Endothelial cell of umbilical vein (primary cell): ENCODE measurements at regions of chr12 and their contacts with region 1.

Region 1: GRCh38 chr12:49515266-49515665 is 23.6 kb upstream of the KCNH3 start:
- DNase-seq: peak; percentile 83
- H3K4me3 ChIP-seq: no peak overlapping the region
- H3K27ac ChIP-seq: peak overlapping the region; percentile 62
- H3K4me1 ChIP-seq: peaks cover 38% of the 10 kb centered on the region
- H3K27me3 ChIP-seq: no peaks in the 10 kb centered on the region
- CTCF ChIP-seq: no peak
- POLR2A ChIP-seq: no peak

Region 2: GRCh38 chr12:48454667-48455066 is 1060.6 kb before region 1 on chr12:
- CTCF ChIA-PET with region 1: no interaction called
- POLR2A ChIA-PET with region 1: no interaction called
- dilution Hi-C with region 1: no loop called
- intact Hi-C with region 1: no loop called
- DNase-seq: peak; percentile 59
- H3K4me3 ChIP-seq: no peak overlapping the region
- H3K27ac ChIP-seq: no peak overlapping the region
- H3K4me1 ChIP-seq: no peaks in the 10 kb centered on the region
- H3K27me3 ChIP-seq: peaks cover 0 to 5% of the 10 kb centered on the region in 2 experiments
- CTCF ChIP-seq: peak; percentile 30 to 57
- POLR2A ChIP-seq: no peak

Region 3: GRCh38 chr12:49060237-49061156 is 454.8 kb before region 1 on chr12 and contains the start of gene KMT2D:
- CTCF ChIA-PET with region 1: no interaction called
- POLR2A ChIA-PET with region 1: no interaction called
- dilution Hi-C with region 1: no loop called
- intact Hi-C with region 1: no loop called
- DNase-seq: peak; percentile 92
- H3K4me3 ChIP-seq: peak within 1 kb of the TSS; percentile 73 to 97 (median 77)
- H3K27ac ChIP-seq: peak within 1 kb of the TSS; percentile 93
- H3K4me1 ChIP-seq: peaks cover 39% of the 10 kb centered on the region
- H3K27me3 ChIP-seq: no peaks in the 10 kb centered on the region
- CTCF ChIP-seq: peak; percentile 6 to 13
- POLR2A ChIP-seq: peak; percentile 85
- total RNA-seq, gene KMT2D: 106 and 120 TPM in 2 replicates

Region 4: DNA sequence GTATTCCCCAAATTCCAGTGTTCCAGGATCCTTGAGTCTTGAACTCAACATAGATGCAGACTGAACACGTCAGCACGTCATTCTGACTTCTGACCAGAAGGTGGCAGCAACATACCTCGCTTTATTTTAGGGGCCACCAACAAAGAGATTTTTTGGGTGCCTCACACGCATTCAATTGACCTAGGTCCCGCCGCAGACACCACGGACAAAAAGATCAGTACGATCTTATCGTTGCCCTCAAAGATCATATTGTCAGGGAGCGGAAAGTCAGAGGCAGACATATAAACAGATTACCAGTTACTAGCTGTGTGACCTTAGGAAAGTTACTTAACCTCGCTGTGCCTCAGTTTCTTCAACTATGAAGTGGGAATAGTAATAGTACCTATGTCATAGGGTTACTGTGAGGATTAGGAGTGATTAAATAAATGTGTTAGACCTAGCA is 226.8 kb before region 1 on chr12:
- CTCF ChIA-PET with region 1: interaction called, 6 read pairs
- POLR2A ChIA-PET with region 1: no interaction called
- dilution Hi-C with region 1: no loop called
- intact Hi-C with region 1: loop called (anchors 10 kb)
- DNase-seq: peak; percentile 57
- H3K4me3 ChIP-seq: no peak overlapping the region
- H3K27ac ChIP-seq: no peak overlapping the region
- H3K4me1 ChIP-seq: peaks cover 2% of the 10 kb centered on the region
- H3K27me3 ChIP-seq: peaks cover 4 to 9% of the 10 kb centered on the region in 2 experiments
- CTCF ChIP-seq: peak; percentile 75 to 80
- POLR2A ChIP-seq: no peak

Region 5: DNA sequence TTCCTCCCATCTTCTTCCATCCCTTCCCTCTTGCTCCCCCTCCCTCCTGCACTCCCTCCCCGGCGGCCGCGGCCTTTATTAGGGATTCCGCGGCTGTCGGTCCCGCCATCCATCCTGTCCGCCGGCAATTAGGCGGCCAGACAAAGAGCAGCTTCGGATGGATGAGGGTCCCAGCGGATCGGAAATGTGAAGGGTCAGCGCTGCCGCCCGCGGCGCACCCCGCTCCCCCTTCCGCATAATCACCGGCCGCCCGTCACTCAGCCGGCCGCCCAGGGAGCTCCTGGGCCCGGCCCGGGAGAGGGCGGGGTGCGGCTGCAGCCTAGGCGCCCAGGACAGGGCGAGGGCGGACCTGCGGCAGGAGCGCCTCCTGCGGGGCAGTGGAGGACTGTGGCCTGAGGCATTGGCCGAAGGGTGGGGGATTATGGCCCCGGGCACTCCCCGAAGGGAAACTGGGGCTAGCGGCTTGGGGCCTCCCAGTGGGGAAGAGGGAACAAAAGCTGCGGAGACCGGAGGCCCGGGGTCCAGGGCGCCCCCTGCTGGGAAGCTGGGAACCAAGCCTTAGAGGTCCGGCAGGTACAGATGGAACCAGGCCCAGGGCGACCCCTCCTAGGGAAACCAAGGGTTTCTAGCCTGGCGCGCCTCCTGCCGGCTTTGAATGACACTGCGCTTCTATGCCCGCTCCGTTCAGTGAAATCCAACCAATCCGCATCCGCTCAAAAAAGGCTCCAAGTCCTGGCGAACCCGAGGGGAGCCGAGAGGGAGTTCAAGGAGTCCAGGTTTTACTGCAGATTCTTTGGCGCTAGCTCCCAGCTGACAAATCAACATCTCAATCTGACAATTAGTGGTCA is 173.0 kb before region 1 on chr12:
- CTCF ChIA-PET with region 1: interaction called, 59 read pairs
- POLR2A ChIA-PET with region 1: no interaction called
- dilution Hi-C with region 1: no loop called
- intact Hi-C with region 1: no loop called
- DNase-seq: peak; percentile 76
- H3K4me3 ChIP-seq: peak overlapping the region in 2 of 3 experiments; percentile 24 to 25
- H3K27ac ChIP-seq: no peak overlapping the region
- H3K4me1 ChIP-seq: peaks cover 31% of the 10 kb centered on the region
- H3K27me3 ChIP-seq: peaks cover 50 to 71% of the 10 kb centered on the region in 2 experiments
- CTCF ChIP-seq: peak; percentile 92 to 94
- POLR2A ChIP-seq: no peak

Region 6: DNA sequence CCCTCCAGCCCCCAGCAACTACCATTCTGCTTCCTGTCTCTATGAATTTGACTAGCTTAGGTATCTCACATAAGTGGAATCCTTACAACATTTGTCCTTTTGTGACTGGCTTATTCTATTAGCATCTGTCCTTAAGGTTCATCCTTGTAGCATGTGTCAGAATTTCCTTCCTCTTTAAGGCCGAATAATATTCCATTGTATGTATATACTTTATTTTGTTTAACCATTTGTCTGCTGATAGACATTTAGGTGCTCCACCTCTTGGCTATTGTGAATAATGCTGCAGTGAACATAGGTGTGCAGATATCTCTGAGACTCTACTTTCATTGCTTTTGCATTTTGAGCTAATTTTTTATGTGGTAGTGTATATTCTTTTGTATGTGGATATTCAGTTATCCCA is 72.4 kb before region 1 on chr12:
- CTCF ChIA-PET with region 1: interaction called, 13 read pairs
- POLR2A ChIA-PET with region 1: no interaction called
- dilution Hi-C with region 1: no loop called
- intact Hi-C with region 1: no loop called
- DNase-seq: no peak
- H3K4me3 ChIP-seq: no peak overlapping the region
- H3K27ac ChIP-seq: no peak overlapping the region
- H3K4me1 ChIP-seq: peaks cover 9% of the 10 kb centered on the region
- H3K27me3 ChIP-seq: no peaks in the 10 kb centered on the region
- CTCF ChIP-seq: no peak
- POLR2A ChIP-seq: no peak

Region 7: GRCh38 chr12:49489720-49490119 is 25.5 kb before region 1 on chr12:
- CTCF ChIA-PET with region 1: interaction called, 44 read pairs
- POLR2A ChIA-PET with region 1: no interaction called
- dilution Hi-C with region 1: no loop called
- intact Hi-C with region 1: loop called (anchors 2 kb)
- DNase-seq: peak; percentile 93
- H3K4me3 ChIP-seq: no peak overlapping the region
- H3K27ac ChIP-seq: peak overlapping the region; percentile 81
- H3K4me1 ChIP-seq: peaks cover 23% of the 10 kb centered on the region
- H3K27me3 ChIP-seq: no peaks in the 10 kb centered on the region
- CTCF ChIP-seq: peak in 1 of 2 donors; percentile 32
- POLR2A ChIP-seq: no peak

Region 8: DNA sequence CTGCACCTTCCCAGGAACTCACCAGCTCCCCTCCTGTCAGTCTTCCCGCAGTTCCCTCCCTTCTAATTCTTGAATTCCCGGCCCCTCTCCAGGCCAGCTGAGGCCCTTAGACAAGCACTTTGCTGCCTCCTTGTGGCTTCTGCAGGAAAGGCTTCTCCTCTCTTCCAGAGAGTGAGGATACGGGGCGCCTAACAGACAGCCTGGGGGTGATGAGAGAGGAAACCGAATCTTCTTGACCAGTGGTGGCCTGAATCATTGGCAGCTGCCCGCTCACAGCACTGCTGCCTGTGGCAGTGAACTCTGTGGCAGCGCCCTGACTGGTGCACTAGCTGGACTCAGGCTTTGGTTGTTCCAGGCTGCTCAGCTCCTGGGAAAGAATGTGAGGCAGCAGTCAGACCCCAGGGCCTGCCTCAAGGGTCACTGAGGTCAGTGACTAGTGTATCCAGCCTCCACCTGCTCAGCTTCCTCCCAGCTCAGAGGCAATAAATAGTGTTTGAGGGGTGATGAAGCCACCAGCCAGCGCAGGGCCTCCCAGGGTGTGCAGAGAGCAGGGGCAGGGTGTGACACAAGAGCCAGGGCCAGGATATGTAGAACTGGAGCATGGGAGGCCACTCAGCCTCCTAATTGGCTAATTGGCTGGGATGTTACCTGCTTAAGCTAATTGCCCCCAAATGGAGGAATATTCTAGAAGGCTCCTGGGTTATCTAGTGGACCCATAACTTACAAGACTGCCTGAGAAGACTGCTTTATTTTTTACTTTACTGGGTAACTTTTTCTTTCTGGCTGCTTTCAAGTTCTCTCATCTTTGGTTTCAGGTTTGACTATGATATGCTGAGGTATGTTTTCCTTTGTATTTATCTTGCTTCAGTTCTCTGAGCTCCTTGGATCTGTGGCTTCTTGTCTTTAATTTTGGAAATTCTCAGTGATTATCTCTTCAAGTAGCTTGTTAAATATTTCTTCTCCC is 65.6 kb after region 1 on chr12:
- CTCF ChIA-PET with region 1: interaction called, 11 read pairs
- POLR2A ChIA-PET with region 1: no interaction called
- dilution Hi-C with region 1: no loop called
- intact Hi-C with region 1: loop called (anchors 1 kb)
- DNase-seq: peak; percentile 65
- H3K4me3 ChIP-seq: no peak overlapping the region
- H3K27ac ChIP-seq: no peak overlapping the region
- H3K4me1 ChIP-seq: no peaks in the 10 kb centered on the region
- H3K27me3 ChIP-seq: no peaks in the 10 kb centered on the region
- CTCF ChIP-seq: peak; percentile 89 to 90
- POLR2A ChIP-seq: no peak